Adrenal gland (tissue), 19 donors: ENCODE measurements at regions of chr3 and their contacts with region 1.

Region 1: DNA sequence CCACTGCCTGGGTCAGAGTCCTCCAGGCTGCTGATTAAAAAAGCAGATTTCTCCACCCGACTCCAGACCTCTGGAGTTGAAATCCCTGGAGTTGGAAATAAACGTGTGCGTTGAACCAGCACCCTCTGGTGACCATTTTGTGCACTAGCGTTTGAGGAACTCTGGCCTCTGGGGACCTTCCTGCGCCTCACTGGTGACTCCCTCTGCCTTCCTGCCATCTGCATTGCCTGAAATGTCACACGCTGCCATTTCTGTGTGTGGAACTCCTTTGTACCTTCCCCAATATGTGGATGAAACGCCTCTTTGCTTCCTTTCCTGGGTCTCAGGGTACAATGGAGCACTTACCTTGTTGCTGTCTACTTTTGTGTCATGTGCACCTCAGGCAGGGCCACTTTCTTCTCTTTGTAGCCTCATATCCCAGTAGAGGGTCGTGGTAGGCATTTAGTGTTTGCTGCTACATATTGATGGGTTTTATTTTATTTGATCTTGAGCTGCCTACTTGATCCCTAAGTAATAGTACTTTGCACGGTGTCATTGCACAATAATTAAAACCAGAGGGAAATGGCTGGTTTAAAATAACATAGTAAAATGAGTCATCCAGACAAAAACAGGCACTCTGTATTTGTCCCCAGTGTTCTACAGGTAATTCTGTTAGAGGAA is 56.8 kb downstream of the GPR171 start:
- DNase-seq: peak; percentile 78 to 94 (median 83)
- H3K4me3 ChIP-seq: no peak overlapping the region
- H3K27ac ChIP-seq: peak overlapping the region in 2 of 5 donors; percentile 55 to 59
- H3K4me1 ChIP-seq: peaks cover 0 to 7% of the 10 kb centered on the region in 2 donors
- H3K27me3 ChIP-seq: no peaks in the 10 kb centered on the region
- CTCF ChIP-seq: peak; percentile 86 to 93 (median 92)
- POLR2A ChIP-seq: no peak

Region 2: DNA sequence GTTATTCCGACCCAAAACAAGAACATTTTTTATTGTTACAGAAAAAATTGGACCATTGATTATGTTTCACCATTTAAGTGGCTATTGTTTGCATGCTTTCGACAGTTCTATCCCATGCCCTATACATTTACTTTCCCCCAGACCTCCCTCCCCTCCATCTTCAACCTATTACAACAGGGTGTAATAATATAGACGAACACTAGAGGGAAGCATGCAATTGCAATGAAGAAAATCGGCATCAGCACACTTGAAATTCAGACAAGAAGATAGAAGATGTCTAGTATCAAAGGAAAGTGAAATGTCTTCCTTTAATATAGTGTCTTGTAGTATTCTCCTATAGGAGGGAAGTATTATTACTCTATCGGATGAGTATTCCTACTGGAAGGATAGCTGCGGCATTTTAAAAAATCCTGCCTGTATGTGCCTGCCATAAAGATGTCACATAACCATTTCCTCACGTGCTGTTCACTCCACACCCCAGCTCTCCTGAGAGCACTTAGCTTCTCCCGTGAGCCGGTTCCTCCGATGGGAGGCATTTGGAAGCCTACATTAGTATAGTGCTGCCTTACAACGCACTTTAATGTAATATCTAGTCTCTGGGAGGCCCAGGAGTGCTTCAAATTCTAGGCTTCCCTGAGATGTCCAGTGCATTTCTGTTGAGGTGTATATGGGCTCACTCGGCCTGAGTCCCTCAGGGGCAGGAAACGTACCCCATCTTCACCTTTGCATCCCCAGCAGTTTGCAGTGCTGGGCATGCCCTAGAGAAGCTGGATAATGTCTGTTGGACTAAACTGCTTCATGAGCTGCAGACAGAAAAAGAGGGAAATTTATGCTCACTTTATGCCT is 424.7 kb before region 1 on chr3:
- intact Hi-C with region 1: loop called in 1 of 2 experiments (anchors 5 kb)
- DNase-seq: peak in 1 of 7 donors; percentile 28
- H3K4me3 ChIP-seq: peak overlapping the region in 1 of 4 donors; percentile 13
- H3K27ac ChIP-seq: peak overlapping the region in 4 of 5 donors; percentile 6 to 84 (median 49)
- H3K4me1 ChIP-seq: peaks cover 7 to 9% of the 10 kb centered on the region in 2 donors
- H3K27me3 ChIP-seq: no peaks in the 10 kb centered on the region
- CTCF ChIP-seq: peak; percentile 80 to 97 (median 90)
- POLR2A ChIP-seq: no peak

Region 3: DNA sequence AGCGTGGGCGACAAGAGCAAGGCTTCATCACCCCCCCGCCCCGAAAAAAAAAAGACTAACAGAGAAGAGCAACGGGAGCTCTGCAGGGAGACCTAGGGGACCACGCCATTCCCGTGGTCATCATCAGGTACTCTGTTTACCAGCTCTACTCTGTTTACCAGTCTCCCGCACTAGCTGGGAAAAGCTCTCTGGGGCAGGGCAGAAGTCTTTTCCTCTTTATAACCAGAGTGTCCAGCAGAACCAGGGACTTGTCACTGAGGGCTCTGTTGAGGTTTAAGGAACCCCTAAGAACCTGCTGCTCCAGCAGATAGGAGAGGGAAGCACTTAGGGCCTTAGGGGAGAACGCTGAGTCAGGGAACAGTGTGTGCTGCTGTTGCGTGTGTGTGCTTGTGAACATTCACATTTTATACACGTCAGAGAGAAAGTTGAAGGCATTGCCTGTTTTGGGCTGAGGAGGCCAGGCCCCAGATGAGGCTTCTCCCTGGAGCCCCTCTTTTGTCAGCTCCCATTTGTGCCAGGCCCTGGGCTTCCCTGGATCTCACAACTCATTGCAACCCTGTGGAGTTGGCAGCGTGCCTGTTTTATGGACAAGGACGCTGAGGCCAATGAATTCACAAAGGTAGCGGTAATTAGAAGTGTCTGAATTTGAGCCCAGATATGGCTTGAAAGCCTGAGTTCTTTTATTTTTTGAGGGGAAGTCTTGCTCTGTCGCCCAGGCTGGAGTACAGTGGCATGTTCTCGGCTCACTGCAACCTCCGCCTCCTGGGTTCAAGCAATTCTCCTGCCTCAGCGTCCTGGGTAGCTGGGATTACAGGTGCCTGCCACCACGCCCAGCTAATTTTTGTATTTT is 418.3 kb before region 1 on chr3:
- intact Hi-C with region 1: loop called in 1 of 2 experiments (anchors 5 kb)
- DNase-seq: peak; percentile 72 to 82 (median 80)
- H3K4me3 ChIP-seq: no peak overlapping the region
- H3K27ac ChIP-seq: peak overlapping the region; percentile 52 to 85 (median 68)
- H3K4me1 ChIP-seq: peaks cover 9 to 14% of the 10 kb centered on the region in 2 donors
- H3K27me3 ChIP-seq: no peaks in the 10 kb centered on the region
- CTCF ChIP-seq: no peak
- POLR2A ChIP-seq: peak; percentile 17 to 40

Region 4: DNA sequence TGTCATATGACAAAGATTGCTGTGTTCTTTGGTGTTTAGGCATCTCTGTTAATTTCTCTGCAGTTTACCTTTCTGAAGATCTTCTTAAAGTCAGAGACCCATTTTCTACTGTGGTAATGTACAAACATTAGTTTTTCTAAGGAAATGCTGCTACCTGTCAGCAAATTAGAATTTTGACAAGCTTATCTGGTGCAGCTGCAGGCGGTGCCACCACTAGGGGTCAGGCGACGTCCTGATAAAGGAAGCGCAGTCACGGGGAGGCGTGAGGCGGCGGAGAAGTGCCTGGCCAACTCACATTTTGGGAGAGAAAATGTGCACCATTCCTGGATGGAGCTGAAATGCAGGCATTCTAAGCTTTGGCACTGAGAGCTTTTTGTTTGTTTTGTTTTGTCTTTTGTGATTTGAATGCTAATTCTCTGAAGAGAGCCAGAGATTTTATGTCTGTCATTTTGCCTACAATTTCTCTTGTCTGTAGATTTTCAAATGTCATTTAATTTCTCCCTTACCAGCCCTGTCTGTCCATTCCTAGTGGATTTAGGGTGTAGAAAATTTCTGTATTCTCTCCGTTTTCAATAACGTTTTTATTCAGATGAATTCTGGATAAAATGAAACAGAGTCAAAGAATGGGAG is 358.3 kb before region 1 on chr3:
- intact Hi-C with region 1: loop called (anchors 10 kb)
- DNase-seq: peak; percentile 86 to 93 (median 91)
- H3K4me3 ChIP-seq: no peak overlapping the region
- H3K27ac ChIP-seq: no peak overlapping the region
- H3K4me1 ChIP-seq: no peaks in the 10 kb centered on the region
- H3K27me3 ChIP-seq: no peaks in the 10 kb centered on the region
- CTCF ChIP-seq: peak; percentile 81 to 96 (median 91)
- POLR2A ChIP-seq: no peak

Region 5: DNA sequence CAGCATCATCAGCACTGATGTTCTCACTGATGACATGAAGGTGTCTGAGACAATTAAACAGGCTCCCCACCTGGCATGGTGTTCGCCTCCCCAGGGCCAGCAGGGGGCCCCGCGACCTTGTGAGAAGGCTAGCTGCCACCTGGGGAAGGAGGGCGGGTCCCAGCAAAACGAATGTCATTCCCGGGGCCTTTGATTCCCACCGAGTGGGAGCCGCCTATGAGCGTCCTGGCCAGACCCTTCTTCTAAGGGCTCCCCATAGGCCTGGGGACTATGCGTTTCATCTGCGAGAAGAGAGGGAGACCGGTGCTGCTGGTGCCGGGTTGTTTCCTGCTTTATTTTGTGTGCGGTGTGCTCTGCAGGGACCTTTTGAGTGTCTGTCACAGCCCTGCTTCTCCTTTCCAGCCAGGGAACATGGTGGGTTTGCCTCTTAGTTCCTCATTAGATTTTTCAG is 220.4 kb before region 1 on chr3:
- intact Hi-C with region 1: loop called in 1 of 2 experiments (anchors 10 kb)
- DNase-seq: peak; percentile 24 to 66 (median 46)
- H3K4me3 ChIP-seq: no peak overlapping the region
- H3K27ac ChIP-seq: no peak overlapping the region
- H3K4me1 ChIP-seq: no peaks in the 10 kb centered on the region
- H3K27me3 ChIP-seq: no peaks in the 10 kb centered on the region
- CTCF ChIP-seq: peak; percentile 20 to 67 (median 55)
- POLR2A ChIP-seq: no peak

Region 6: DNA sequence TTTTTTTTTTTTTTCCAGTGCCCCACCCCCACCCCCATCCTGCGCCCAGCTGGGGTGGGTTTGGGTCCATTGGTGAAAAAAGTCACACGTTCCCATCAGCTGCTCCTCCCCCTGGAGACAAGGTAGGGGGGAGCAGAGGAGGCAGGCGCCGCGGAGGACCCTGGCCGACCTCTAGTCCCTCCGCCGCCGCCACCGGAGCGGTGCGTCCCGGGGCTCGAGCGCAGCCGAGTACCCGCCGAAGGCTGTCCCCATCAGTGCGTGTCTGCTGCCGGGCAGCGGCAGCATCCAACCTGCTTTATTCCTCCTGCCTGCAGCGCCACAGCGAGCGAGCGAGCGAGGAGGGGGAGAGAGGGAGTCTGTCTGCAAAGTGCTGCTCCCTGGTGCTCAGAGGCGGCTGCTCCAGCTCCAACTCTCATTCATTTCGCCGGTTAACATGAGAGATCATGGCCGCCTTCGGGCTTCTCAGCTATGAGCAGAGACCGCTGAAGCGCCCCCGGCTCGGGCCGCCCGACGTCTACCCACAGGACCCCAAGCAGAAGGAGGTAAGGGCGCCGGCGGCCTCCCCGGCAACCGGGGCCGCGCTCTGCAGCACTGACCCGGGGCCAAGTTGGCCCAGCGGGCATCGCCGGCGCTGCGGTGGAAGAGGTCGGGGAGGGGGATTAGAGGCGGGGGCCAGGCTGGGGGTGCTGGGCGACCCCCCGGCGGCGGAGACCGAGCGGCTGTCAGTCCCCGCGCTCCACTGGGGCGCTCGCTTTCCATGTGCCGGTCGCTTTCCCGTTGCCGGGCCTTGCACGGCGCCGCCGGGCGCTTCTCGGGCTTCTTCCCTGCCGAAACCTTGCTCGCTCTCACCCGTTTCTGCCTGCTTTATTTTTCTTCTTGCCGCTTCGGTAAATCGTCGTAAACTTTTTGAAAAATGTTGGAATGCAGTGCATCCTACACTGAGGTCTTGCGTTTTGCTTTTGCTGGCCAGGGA is 59.4 kb before region 1 on chr3:
- intact Hi-C with region 1: loop called (anchors 10 kb)
- DNase-seq: peak; percentile 75 to 91 (median 86)
- H3K4me3 ChIP-seq: peak overlapping the region in 3 of 4 donors; percentile 7 to 87 (median 65)
- H3K27ac ChIP-seq: peak overlapping the region in 3 of 5 donors; percentile 28 to 75 (median 68)
- H3K4me1 ChIP-seq: peaks cover 7 to 8% of the 10 kb centered on the region in 2 donors
- H3K27me3 ChIP-seq: peaks cover 3% of the 10 kb centered on the region
- CTCF ChIP-seq: peak in 3 of 6 experiments; percentile 34 to 50 (median 48)
- POLR2A ChIP-seq: peak in 1 of 2 donors; percentile 68

Region 7: DNA sequence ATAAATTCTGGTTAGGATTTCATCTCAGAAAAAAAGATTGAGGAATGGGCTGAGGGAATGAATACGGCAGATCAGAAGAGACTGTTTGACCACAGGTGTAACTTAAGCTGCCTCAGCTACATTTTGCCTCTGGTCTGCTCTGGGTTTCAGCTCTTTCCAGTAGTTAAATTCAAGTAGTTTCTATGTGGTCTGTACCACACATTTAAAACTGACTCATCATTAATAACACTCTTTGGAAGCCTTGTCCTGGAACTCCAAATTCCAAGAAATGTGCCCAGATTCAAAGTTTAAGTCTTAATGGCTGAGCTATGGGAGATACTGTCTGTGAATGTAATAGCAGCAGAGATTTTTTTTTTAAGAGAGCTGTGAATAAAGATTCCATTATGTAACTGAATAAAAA is 447.7 kb after region 1 on chr3:
- intact Hi-C with region 1: no loop called
- DNase-seq: no peak
- H3K4me3 ChIP-seq: no peak overlapping the region
- H3K27ac ChIP-seq: no peak overlapping the region
- H3K4me1 ChIP-seq: no peaks in the 10 kb centered on the region
- H3K27me3 ChIP-seq: no peaks in the 10 kb centered on the region
- CTCF ChIP-seq: no peak
- POLR2A ChIP-seq: no peak

Region 8: DNA sequence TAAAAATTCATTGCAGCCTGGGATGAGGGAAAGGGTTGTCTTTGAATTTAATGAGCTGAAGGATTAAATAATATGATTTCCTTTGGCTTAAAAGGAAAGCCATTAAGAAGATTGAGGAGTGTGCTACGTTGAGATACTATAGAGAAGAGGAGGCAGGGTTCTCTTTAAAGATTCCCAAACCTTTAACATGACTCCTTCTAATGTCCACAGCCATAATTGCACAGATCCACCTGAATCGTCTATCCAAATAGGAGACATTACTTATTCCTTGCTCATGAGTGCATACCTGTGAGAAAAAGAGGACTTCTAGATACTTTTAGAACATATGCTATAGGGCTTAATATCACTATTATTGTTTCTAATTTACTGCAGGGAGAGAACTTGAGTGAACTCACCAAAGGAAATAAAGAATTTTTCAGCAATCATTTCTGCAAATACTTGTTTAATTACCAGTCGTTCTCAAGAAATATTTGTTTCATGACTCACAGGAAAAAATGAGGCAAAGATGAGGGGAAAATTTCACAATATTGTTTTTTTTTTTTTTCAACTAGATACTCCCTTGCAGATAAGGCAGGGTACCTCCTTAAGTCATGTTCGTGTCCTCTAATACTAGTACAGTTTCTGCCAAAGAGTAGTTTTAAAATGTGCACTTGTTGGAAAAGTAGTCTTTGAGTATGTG is 718.4 kb after region 1 on chr3:
- intact Hi-C with region 1: no loop called
- DNase-seq: no peak
- H3K4me3 ChIP-seq: no peak overlapping the region
- H3K27ac ChIP-seq: peak overlapping the region in 3 of 5 donors; percentile 24 to 54 (median 42)
- H3K4me1 ChIP-seq: peaks cover 14 to 26% of the 10 kb centered on the region in 2 donors
- H3K27me3 ChIP-seq: no peaks in the 10 kb centered on the region
- CTCF ChIP-seq: no peak
- POLR2A ChIP-seq: no peak